ENCODE measurements at regions of chr2 and their contacts with region 1.

Region 1: GRCh38 chr2:172465417-172466334 is 38.3 kb downstream of the ITGA6 start:
- H3K4me3 Mint-ChIP-seq: no peak overlapping the region
- H3K27ac Mint-ChIP-seq: no peak overlapping the region
- H3K4me1 Mint-ChIP-seq: peaks cover 25% of the 10 kb centered on the region
- H3K27me3 Mint-ChIP-seq: peaks cover 7% of the 10 kb centered on the region

Region 2: GRCh38 chr2:171574149-171574795 is 891.4 kb before region 1 on chr2:
- intact Hi-C with region 1: loop called (anchors 10 kb)
- H3K4me3 Mint-ChIP-seq: no peak overlapping the region
- H3K27ac Mint-ChIP-seq: no peak overlapping the region
- H3K4me1 Mint-ChIP-seq: peaks cover 6% of the 10 kb centered on the region
- H3K27me3 Mint-ChIP-seq: no peaks in the 10 kb centered on the region

Region 3: GRCh38 chr2:171598713-171599319 is 866.9 kb before region 1 on chr2:
- intact Hi-C with region 1: no loop called
- H3K4me3 Mint-ChIP-seq: no peak overlapping the region
- H3K27ac Mint-ChIP-seq: no peak overlapping the region
- H3K4me1 Mint-ChIP-seq: peaks cover 5% of the 10 kb centered on the region
- H3K27me3 Mint-ChIP-seq: peaks cover 9% of the 10 kb centered on the region

Region 4: DNA sequence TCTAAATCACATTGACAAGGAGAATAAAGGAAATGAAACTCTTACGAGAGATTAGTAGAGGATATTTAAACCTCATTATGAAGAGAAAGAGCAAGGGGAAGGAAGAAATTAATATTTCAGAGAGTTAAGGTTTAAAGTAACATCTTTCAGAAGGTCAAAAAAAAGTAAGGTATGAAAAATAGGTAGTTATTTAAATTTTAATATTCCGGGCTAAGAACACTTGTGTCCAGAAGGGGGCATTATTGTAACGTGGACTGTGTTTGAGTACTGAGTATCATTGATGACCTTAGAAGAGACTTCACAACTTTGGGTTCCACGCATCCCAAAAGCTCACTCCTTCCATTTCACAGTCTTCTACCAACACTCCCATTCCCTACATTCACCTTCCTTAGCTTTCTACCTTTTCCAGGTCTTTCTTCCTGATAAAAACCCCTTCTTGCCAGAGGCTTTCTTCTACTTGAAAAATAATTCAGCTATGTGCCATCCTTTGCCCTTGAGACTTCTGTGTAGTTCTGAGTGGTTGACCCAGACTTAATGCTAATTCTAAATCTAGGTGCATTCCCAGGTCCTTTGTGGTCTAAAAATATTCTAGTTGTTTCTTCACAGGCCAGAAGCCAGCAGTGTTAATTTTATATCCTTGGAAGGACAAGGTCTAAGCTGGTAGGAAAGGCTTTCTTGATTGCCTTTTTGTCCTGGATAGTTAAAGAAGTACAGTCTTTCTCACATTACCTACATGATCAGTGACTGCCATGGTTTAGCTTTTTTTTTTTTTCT is 761.9 kb before region 1 on chr2:
- intact Hi-C with region 1: loop called (anchors 5 kb)
- H3K4me3 Mint-ChIP-seq: no peak overlapping the region
- H3K27ac Mint-ChIP-seq: no peak overlapping the region
- H3K4me1 Mint-ChIP-seq: peaks cover 9% of the 10 kb centered on the region
- H3K27me3 Mint-ChIP-seq: no peaks in the 10 kb centered on the region

Region 5: DNA sequence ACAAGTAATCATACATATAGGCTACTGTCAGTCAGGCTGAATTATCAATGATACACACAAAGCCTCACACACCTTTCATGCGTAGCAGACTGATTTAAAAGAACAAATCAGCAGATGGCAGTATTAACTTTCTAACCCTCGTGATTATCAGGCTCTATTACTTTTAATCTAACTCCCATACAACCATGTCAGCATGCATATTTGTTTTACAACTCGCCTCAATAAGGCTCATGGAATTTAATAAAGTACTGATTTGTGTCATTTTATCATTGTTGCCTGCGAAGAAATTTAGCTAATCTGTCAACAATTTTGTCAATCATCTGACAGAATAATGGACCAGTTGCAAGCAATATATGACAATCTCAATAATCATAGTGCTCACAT is 654.4 kb before region 1 on chr2:
- intact Hi-C with region 1: loop called (anchors 10 kb)
- H3K4me3 Mint-ChIP-seq: no peak overlapping the region
- H3K27ac Mint-ChIP-seq: no peak overlapping the region
- H3K4me1 Mint-ChIP-seq: no peaks in the 10 kb centered on the region
- H3K27me3 Mint-ChIP-seq: no peaks in the 10 kb centered on the region

Region 6: GRCh38 chr2:172172513-172173173 is 293.0 kb before region 1 on chr2:
- intact Hi-C with region 1: loop called (anchors 1 kb)
- H3K4me3 Mint-ChIP-seq: peak overlapping the region; percentile 82
- H3K27ac Mint-ChIP-seq: peak overlapping the region; percentile 67
- H3K4me1 Mint-ChIP-seq: peaks cover 26% of the 10 kb centered on the region
- H3K27me3 Mint-ChIP-seq: peaks cover 13% of the 10 kb centered on the region

Measured in dendritic cell treated with granulocyte-macrophage colony-stimulating factor and Interleukin-4, amounts not matched to agents 40 ng/mL and 50 ng/mL, for 4 days (primary cell).